ENCODE measurements at regions of chr22 and their contacts with region 1.

Region 1: DNA sequence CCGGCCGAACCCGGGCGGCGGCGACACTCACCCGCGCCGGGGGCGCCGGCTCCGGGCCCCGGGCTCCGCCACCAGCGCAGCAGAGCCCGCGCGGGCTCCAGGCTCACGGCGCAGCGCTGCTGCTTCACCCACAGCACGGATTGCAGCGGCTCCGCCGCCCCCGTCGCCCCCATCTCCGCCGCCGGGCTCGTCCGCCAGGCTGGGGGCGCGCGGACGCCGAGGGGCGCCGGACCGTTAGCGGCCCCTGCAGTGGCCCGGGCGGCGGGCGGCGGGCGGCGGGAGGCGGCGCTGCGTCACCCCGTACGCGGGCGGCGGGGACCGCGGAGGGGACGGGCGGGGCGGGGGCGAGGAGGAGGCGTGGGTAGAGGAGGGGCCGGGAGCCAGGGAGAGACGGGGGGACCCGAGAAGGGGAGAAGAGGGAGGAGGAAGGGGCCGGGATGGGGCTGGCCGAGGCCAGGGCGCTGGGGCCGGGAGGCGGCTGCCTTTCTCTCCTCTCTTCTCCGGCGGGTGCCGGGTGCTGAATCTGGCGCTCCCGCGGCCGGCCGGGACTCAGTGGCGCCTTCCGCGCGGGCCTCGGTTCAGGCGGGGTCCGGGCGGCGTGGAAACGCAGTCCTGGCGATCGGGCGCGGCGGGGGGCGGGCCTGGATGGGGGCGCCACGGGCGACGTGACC is at the start of gene CERK:
- DNase-seq: peak; percentile 86 to 94 (median 90)
- ATAC-seq: peak; percentile 52 to 77 (median 70)
- H3K4me3 ChIP-seq: peak within 1 kb of the TSS; percentile 57 to 100 (median 92)
- H3K27ac ChIP-seq: peak within 1 kb of the TSS; percentile 90 to 100 (median 98)
- H3K4me1 ChIP-seq: peaks cover 9 to 87% (median 56%) of the 10 kb centered on the region in 12 donors
- H3K27me3 ChIP-seq: no peaks in the 10 kb centered on the region
- CTCF ChIP-seq: no peak
- POLR2A ChIP-seq: peak in 1 of 2 donors; percentile 87
- total RNA-seq, gene CERK: 52.6 to 125 (median 72.3) TPM

Region 2: GRCh38 chr22:46584081-46584921 is 153.8 kb before region 1 on chr22:
- intact Hi-C with region 1: loop called in 5 of 10 experiments (anchors 5 kb)
- DNase-seq: peak in 2 of 5 donors; percentile 38 to 60
- ATAC-seq: no peak
- H3K4me3 ChIP-seq: no peak overlapping the region
- H3K27ac ChIP-seq: peak overlapping the region in 5 of 12 donors; percentile 24 to 63 (median 41)
- H3K4me1 ChIP-seq: peaks cover 14 to 90% (median 67%) of the 10 kb centered on the region in 12 donors
- H3K27me3 ChIP-seq: no peaks in the 10 kb centered on the region
- CTCF ChIP-seq: no peak
- POLR2A ChIP-seq: no peak

Region 3: DNA sequence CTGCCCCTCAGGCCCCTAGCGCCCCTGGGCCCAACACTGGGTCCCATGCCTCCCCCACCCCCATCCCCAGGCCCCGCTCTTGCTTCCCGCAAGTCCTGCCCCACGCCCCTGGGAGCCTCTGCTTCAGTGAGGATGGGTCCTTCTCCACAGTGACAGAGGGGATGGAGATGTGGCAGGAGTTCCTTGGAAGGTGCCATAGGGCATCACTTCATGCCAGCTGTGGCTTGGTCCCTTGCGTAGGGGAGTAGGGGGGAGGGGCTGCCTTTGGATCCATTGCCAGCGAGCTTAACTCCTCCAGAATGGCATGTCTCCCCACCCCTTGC is 14.8 kb after region 1 on chr22:
- intact Hi-C with region 1: loop called in 1 of 10 experiments (anchors 2 kb)
- DNase-seq: no peak
- ATAC-seq: no peak
- H3K4me3 ChIP-seq: no peak overlapping the region
- H3K27ac ChIP-seq: peak overlapping the region; percentile 70 to 96 (median 92)
- H3K4me1 ChIP-seq: peaks cover 9 to 64% (median 45%) of the 10 kb centered on the region in 12 donors
- H3K27me3 ChIP-seq: no peaks in the 10 kb centered on the region
- CTCF ChIP-seq: no peak
- POLR2A ChIP-seq: no peak

Region 4: GRCh38 chr22:46762238-46763050 is 24.3 kb after region 1 on chr22 and contains the start of gene TBC1D22A:
- intact Hi-C with region 1: loop called in 2 of 10 experiments (anchors 2 kb)
- DNase-seq: peak; percentile 93 to 98 (median 95)
- ATAC-seq: peak; percentile 94 to 96 (median 95)
- H3K4me3 ChIP-seq: peak within 1 kb of the TSS; percentile 70 to 99 (median 88)
- H3K27ac ChIP-seq: peak within 1 kb of the TSS; percentile 85 to 99 (median 94)
- H3K4me1 ChIP-seq: peaks cover 0 to 60% (median 36%) of the 10 kb centered on the region in 12 donors
- H3K27me3 ChIP-seq: no peaks in the 10 kb centered on the region
- CTCF ChIP-seq: peak in 3 of 12 donors; percentile 7 to 9 (median 7)
- POLR2A ChIP-seq: peak; percentile 85 to 98
- total RNA-seq, gene TBC1D22A: 14.0 to 30.7 (median 18.6) TPM